ENCODE measurements at regions of chr19 and their contacts with region 1.

Region 1: DNA sequence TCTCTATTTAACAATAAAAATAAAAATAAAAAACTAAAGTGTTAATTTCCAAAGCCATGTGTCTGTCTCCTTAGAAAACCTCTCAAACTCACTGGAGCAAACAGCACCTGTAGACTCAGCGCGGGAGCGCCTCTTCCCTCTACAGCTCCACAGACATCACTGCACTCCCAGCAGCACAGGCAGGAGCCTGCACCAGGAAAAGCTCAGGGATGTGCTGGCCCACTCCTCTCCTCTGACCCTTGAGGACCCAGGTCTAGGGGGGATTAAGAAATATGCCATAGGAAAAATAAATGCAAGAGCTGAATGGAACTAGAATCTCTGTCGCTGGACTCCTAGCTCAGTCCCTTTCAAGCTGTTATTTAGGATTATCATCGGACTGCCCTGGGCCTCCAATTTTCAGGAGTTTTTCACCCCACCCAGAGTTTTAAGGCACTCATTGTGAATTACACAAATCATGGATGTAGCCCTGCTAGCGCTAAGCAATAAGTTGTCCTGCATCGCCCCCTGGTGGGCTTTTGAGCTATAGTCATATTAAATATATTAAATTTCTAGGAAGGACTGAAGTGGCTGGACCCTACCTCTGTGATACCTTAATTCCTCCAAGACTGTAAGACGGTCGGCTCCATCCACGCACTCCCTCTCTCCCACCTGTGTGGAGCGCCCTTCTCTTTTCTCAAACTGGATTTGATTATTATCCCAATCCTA is 333.9 kb downstream of the UQCRFS1 start:
- DNase-seq: peak; percentile 68
- H3K4me3 ChIP-seq: no peak overlapping the region
- H3K27ac ChIP-seq: no peak overlapping the region
- H3K4me1 ChIP-seq: no peaks in the 10 kb centered on the region
- H3K27me3 ChIP-seq: no peaks in the 10 kb centered on the region
- CTCF ChIP-seq: peak; percentile 69

Region 2: DNA sequence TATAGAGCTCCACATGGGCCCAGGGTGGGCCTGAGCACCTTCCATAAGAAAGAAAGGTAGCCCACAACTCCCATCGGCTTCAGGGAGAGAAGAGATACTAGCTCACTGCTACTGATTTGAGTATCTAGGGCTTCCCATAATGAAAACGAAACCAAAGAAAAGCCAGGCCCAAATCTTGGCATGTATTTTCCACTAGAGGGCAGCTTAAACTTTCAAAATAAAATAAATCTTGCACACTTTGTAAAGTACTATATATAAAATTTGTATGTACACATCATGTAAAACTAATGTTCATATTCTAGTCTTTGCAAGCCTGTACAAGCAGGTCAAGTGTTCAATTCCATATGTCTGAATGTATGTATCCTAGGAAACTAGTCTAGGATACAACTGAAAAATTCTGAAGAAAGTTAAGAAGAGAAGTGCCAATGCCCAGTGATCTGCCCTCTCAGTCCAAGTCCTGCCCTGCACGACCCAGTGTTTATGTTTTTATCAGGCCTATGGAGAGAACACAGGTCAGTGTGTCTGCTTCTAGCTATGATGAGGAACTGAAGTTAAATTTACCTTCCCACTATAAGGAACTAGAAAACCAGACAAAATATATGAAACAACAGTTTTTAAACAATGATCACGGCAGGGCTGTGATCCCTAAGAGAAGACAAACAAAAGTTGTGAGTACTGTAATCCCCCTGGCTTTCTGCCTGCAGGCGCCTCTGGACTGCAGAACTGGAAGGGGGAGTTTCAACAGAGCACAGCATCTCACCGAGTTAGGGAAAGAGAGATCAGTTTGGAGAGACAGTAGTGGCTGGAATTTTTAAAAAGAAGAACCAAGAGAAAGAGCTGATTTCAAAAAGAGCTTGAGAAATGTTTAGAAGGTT is 141.8 kb before region 1 on chr19:
- CTCF ChIA-PET with region 1: no interaction called
- POLR2A ChIA-PET with region 1: no interaction called
- intact Hi-C with region 1: loop called (anchors 5 kb)
- DNase-seq: peak; percentile 8
- H3K4me3 ChIP-seq: no peak overlapping the region
- H3K27ac ChIP-seq: no peak overlapping the region
- H3K4me1 ChIP-seq: no peaks in the 10 kb centered on the region
- H3K27me3 ChIP-seq: no peaks in the 10 kb centered on the region
- CTCF ChIP-seq: peak; percentile 46

Measured in A673 (cell line).